Activated B cell treated with CpG ODN at 0.5 μM for 24 hours (primary cell): ENCODE measurements at regions of chr15 and their contacts with region 1.

Region 1: DNA sequence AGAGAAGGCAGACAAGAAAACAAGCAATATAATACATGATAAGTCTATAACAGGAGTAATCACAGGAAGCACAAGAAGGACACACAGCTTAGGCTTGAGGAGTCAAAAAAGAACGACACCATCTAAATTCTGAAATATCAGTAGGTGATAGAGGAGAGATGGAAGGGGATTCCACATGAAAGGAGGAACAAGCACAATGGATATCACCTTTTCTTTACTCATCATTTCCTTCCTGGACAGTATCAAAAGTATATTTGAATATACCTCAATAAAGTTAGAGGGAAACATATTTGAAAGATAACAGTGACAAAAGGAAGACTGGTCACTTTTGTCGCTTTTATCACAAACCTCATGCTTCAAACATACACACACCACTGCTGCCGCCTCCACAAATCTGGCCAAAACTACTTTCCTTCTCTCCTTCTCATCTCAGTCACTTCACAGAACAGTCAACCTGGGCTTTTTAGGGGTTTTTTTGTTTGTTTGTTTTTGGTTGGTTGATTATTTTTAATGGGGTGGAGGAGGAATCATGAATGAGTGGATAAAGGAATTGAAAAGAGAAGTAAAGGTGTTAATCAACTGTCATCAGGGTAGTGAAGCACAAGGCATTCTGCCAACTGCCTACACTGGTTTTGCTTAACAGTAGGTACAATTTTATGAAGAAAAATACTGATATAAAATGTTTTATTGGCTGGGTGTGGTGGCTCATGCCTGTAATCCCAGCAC is 18.5 kb downstream of the DENND4A start:
- DNase-seq: no peak
- ATAC-seq: peak; percentile 71
- H3K4me3 Mint-ChIP-seq: peak overlapping the region; percentile 76
- H3K27ac Mint-ChIP-seq: peak overlapping the region; percentile 94
- H3K4me1 Mint-ChIP-seq: peaks cover 90% of the 10 kb centered on the region
- H3K27me3 Mint-ChIP-seq: no peaks in the 10 kb centered on the region
- CTCF ChIP-seq: no peak

Region 2: DNA sequence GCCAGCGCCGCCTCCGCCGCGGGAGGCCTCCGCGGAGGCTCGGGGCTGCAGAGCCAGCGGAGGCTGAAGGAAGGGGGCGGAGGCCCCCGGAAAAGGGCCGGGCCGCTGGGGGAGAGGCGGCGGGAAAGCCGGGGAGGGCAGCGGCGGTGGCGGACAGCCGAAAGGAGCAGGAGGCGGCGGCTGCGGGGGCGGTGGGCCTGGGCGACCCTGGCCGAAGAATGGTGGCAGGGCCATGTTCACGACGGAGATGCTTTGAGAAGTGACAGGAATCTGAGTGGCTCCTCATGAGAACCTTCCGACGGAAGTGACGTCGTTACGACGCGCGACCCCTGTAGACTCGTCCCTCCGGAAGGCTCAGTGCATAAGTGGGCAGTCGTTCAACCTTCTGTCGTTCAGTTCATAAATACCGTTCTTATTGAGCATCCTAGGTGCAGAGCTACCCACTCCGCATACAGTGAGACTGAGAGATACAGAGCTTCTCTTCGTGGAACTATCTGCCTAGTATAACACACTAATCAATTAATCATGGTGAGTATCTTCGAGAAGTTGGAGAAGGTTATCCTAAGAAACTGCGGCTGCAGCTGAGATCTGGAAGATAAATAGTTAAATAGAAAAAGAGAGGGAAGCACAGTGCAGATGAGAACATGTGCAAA is 639.9 kb before region 1 on chr15 and contains the start of gene PDCD7:
- CTCF ChIA-PET with region 1: no interaction called
- POLR2A ChIA-PET with region 1: interaction called, 14 read pairs
- intact Hi-C with region 1: no loop called
- DNase-seq: peak; percentile 70
- ATAC-seq: peak; percentile 95
- H3K4me3 Mint-ChIP-seq: peak within 1 kb of the TSS; percentile 89
- H3K27ac Mint-ChIP-seq: peak within 1 kb of the TSS; percentile 84
- H3K4me1 Mint-ChIP-seq: peaks cover 28% of the 10 kb centered on the region
- H3K27me3 Mint-ChIP-seq: no peaks in the 10 kb centered on the region
- CTCF ChIP-seq: no peak
- total RNA-seq, gene PDCD7: 29.3 and 30.7 TPM in 2 replicates

Region 3: DNA sequence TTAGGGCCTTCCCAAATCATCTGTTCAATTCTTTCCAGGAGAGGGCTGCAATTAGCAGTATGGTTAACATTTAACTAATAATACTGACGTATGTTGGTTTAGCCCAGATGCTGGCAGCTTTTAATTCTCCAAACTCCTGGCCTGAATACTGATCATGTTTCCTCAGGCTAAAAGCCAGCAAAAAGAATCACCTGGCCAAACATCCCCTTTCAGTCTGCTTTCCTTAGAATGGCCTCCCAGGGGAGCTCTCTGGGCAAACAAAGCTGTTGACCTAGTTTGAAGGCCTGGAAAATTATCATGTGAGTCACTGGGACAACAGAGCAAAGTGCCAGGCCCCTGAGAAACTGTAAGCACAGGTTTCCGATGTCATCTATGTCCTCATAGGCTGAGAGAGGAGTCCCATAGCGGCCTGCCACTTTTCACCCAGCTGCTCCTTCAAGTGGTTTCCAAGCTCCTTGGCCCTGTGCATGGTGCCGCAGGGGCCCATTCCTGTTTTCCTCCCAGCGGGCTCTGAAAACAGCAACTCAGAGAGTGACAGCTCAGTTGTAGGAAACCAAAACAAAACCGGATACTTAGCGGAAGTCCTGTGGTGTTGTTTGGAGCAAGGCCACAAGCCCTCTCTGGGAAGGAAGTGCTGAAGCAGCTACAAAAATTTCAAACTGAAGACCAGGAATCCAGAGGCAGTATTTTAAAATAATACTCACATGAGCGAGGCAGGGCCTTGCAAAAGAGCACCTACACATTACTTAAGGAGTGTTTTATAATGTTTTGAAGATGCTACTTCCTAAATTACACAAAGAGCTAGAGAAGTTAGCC is 59.2 kb after region 1 on chr15:
- CTCF ChIA-PET with region 1: interaction called, 4 read pairs
- POLR2A ChIA-PET with region 1: interaction called, 23 read pairs
- intact Hi-C with region 1: no loop called
- DNase-seq: peak; percentile 38
- ATAC-seq: peak; percentile 59
- H3K4me3 Mint-ChIP-seq: peak overlapping the region; percentile 68
- H3K27ac Mint-ChIP-seq: peak overlapping the region; percentile 86
- H3K4me1 Mint-ChIP-seq: peaks cover 64% of the 10 kb centered on the region
- H3K27me3 Mint-ChIP-seq: no peaks in the 10 kb centered on the region
- CTCF ChIP-seq: no peak